ENCODE measurements at regions of chr7 and their contacts with region 1.

Region 1: GRCh38 chr7:135801045-135801693 is 52.6 kb upstream of the FAM180A start:
- DNase-seq: peak; percentile 50 to 69 (median 66)
- H3K4me3 ChIP-seq: no peak overlapping the region
- H3K4me3 Mint-ChIP-seq: peak overlapping the region in 5 of 8 donors; percentile 36 to 75 (median 50)
- H3K27ac ChIP-seq: no peak overlapping the region
- H3K27ac Mint-ChIP-seq: peak overlapping the region in 1 of 7 donors; percentile 76
- H3K4me1 ChIP-seq: peaks cover 7% of the 10 kb centered on the region
- H3K4me1 Mint-ChIP-seq: peaks cover 6 to 17% (median 10%) of the 10 kb centered on the region in 4 donors
- H3K27me3 ChIP-seq: no peaks in the 10 kb centered on the region
- H3K27me3 Mint-ChIP-seq: peaks cover 0 to 2% of the 10 kb centered on the region in 2 donors

Region 2: GRCh38 chr7:134632937-134633540 is 1168.1 kb before region 1 on chr7:
- CTCF ChIA-PET with region 1: no interaction called
- POLR2A ChIA-PET with region 1: no interaction called
- intact Hi-C with region 1: no loop called
- DNase-seq: peak; percentile 57 to 65 (median 62)
- H3K4me3 ChIP-seq: no peak overlapping the region
- H3K4me3 Mint-ChIP-seq: no peak overlapping the region
- H3K27ac ChIP-seq: no peak overlapping the region
- H3K27ac Mint-ChIP-seq: peak overlapping the region in 1 of 7 donors; percentile 19
- H3K4me1 ChIP-seq: peaks cover 17% of the 10 kb centered on the region
- H3K4me1 Mint-ChIP-seq: peaks cover 13 to 18% (median 16%) of the 10 kb centered on the region in 4 donors
- H3K27me3 ChIP-seq: no peaks in the 10 kb centered on the region
- H3K27me3 Mint-ChIP-seq: peaks cover 9 to 12% of the 10 kb centered on the region in 2 donors

Region 3: GRCh38 chr7:136000288-136000913 is 199.2 kb after region 1 on chr7:
- CTCF ChIA-PET with region 1: interaction called, 187 read pairs
- POLR2A ChIA-PET with region 1: no interaction called
- intact Hi-C with region 1: no loop called
- DNase-seq: no peak
- H3K4me3 ChIP-seq: no peak overlapping the region
- H3K4me3 Mint-ChIP-seq: no peak overlapping the region
- H3K27ac ChIP-seq: no peak overlapping the region
- H3K27ac Mint-ChIP-seq: no peak overlapping the region
- H3K4me1 ChIP-seq: no peaks in the 10 kb centered on the region
- H3K4me1 Mint-ChIP-seq: no peaks in the 10 kb centered on the region
- H3K27me3 ChIP-seq: no peaks in the 10 kb centered on the region
- H3K27me3 Mint-ChIP-seq: no peaks in the 10 kb centered on the region

Region 4: GRCh38 chr7:136016649-136017395 is 215.7 kb after region 1 on chr7:
- CTCF ChIA-PET with region 1: interaction called, 187 read pairs
- POLR2A ChIA-PET with region 1: interaction called, 3 read pairs
- intact Hi-C with region 1: no loop called
- DNase-seq: no peak
- H3K4me3 ChIP-seq: no peak overlapping the region
- H3K4me3 Mint-ChIP-seq: no peak overlapping the region
- H3K27ac ChIP-seq: no peak overlapping the region
- H3K27ac Mint-ChIP-seq: no peak overlapping the region
- H3K4me1 ChIP-seq: no peaks in the 10 kb centered on the region
- H3K4me1 Mint-ChIP-seq: peaks cover 0 to 8% (median 4%) of the 10 kb centered on the region in 4 donors
- H3K27me3 ChIP-seq: no peaks in the 10 kb centered on the region
- H3K27me3 Mint-ChIP-seq: no peaks in the 10 kb centered on the region

Region 5: DNA sequence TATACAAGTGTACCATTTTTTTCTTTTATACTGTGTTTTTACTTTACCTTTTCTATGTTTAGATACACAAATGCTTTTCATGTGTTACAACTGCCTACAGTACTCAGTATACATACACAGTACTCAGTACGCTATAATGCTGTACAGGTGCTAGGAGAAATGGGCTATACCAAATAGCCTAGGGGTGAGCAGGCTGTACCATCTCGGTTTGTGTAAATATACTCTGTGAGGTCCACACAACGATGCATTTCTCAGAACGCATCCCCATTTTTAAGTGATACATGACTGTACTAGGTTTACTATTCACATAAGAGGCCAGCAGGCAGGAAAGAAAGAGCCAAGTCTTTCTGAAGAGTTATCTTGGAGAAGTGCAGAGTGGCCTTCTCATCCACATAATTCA is 602.4 kb after region 1 on chr7:
- CTCF ChIA-PET with region 1: no interaction called
- POLR2A ChIA-PET with region 1: no interaction called
- intact Hi-C with region 1: loop called (anchors 5 kb)
- DNase-seq: no peak
- H3K4me3 ChIP-seq: no peak overlapping the region
- H3K4me3 Mint-ChIP-seq: no peak overlapping the region
- H3K27ac ChIP-seq: no peak overlapping the region
- H3K27ac Mint-ChIP-seq: no peak overlapping the region
- H3K4me1 ChIP-seq: no peaks in the 10 kb centered on the region
- H3K4me1 Mint-ChIP-seq: peaks cover 0 to 8% (median 4%) of the 10 kb centered on the region in 4 donors
- H3K27me3 ChIP-seq: no peaks in the 10 kb centered on the region
- H3K27me3 Mint-ChIP-seq: no peaks in the 10 kb centered on the region

Measured in CD4-positive, alpha-beta memory T cell (primary cell).